GM23248 (cell line): ENCODE measurements at regions of chr10 and their contacts with region 1.

Region 1: DNA sequence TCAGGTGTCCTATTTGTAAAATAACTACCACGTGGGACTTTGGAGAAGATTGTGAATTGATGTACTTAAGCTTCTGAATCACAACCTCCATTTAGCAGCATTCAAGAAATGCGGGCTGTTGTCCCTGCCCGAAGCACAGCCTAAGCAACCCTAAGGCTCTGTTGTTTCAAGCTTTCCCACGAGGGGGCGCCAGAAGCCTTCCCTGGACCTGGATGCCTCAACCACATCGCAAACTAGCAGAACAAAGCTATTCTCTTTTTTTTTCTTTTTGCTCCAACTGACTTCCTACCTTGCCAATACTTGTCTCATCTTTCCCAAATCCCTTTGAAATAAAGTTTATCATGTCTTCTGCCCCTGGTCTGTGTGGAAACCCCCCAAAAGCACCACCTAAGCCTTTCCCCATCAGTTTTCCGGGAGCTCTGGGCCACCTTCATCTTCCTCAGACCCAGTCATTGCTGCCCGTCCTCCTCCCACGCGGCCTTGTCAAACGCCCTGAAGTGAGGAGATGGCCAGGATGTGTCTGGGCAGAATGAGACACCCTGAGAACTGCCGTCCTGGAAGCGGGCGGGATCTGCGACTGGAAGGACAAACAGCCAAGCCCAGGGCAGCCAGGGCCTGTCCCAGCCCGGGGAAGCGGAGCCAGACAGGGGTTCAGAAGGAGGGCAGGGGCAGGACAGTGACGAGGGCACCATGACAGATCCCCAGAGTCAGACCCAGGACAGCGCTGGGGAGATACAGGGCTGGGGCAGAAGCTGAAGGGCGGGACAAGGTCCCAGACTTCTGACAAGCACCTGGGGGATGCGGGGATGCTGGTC is 112.7 kb downstream of the SLIT1 start:
- DNase-seq: peak; percentile 77
- H3K4me3 ChIP-seq: no peak overlapping the region
- H3K27ac ChIP-seq: no peak overlapping the region
- H3K4me1 ChIP-seq: no peaks in the 10 kb centered on the region
- H3K27me3 ChIP-seq: peaks cover 21% of the 10 kb centered on the region

Region 2: GRCh38 chr10:97200616-97201015 is 127.6 kb after region 1 on chr10:
- in situ Hi-C with region 1: loop called (anchors 10 kb)
- DNase-seq: no peak
- H3K4me3 ChIP-seq: no peak overlapping the region
- H3K27ac ChIP-seq: no peak overlapping the region
- H3K4me1 ChIP-seq: no peaks in the 10 kb centered on the region
- H3K27me3 ChIP-seq: no peaks in the 10 kb centered on the region; the same call in 1 of the 2 replicates

Region 3: GRCh38 chr10:97475936-97476594 is 403.0 kb after region 1 on chr10:
- in situ Hi-C with region 1: no loop called
- DNase-seq: peak; percentile 88
- H3K4me3 ChIP-seq: no peak overlapping the region
- H3K27ac ChIP-seq: peak overlapping the region; percentile 74
- H3K4me1 ChIP-seq: peaks cover 22% of the 10 kb centered on the region
- H3K27me3 ChIP-seq: no peaks in the 10 kb centered on the region